Right lobe of liver (tissue), 6 donors: ENCODE measurements at regions of chr1 and their contacts with region 1.

Region 1: DNA sequence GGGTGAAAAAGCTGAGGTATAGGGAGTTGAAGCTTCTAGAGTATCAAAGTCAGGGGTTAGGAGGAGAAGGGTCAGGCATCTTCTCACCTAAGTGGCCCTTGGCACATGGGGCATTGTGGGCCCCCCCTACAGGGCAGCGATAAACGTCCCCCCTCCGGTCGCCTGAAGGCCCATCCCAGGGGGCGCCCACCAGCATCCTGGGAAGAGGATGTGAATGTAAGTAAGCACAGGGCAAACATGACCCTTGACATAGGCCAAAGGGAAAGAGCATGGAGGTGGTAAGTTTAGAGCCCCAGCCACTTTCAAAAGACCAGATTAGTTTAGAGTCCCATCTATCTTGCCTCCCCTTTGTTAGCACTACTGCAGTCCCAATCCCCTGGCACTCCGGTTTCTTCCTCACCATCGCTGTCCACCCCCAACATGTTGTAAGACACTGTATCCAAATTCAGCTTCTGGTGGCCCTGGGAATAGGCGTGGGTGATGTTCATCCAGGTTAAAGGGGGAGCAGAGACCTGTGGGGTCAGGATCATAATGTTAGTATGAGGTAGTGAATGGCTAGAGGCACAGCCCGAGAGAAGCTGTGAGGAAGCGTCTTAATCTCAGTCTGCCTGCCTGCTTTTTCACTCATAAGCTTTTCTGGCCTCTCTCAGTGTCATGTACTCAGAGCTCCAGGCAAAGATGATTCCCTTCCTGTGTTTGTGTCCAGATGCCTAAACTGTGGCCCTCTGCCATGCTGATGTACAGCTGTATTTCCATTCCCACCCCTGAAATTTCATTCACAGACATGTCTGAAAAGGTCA is 2.7 kb downstream of the ITGA10 start:
- DNase-seq: no peak
- ATAC-seq: peak in 1 of 4 donors; percentile 23
- H3K4me3 ChIP-seq: no peak overlapping the region
- H3K27ac ChIP-seq: no peak overlapping the region
- H3K4me1 ChIP-seq: no peaks in the 10 kb centered on the region
- H3K27me3 ChIP-seq: no peaks in the 10 kb centered on the region
- CTCF ChIP-seq: no peak
- POLR2A ChIP-seq: no peak

Region 2: GRCh38 chr1:145858894-145859490 is 48.2 kb before region 1 on chr1 and contains the start of gene PIAS3:
- intact Hi-C with region 1: loop called in 1 of 2 experiments (anchors 10 kb)
- DNase-seq: peak; percentile 98
- ATAC-seq: peak; percentile 93 to 96 (median 94)
- H3K4me3 ChIP-seq: peak within 1 kb of the TSS; percentile 54 to 80 (median 71)
- H3K27ac ChIP-seq: peak within 1 kb of the TSS; percentile 45 to 61 (median 55)
- H3K4me1 ChIP-seq: peaks cover 0 to 12% (median 0%) of the 10 kb centered on the region in 4 donors
- H3K27me3 ChIP-seq: no peaks in the 10 kb centered on the region
- CTCF ChIP-seq: no peak
- POLR2A ChIP-seq: peak; percentile 49
- total RNA-seq, gene PIAS3: 5.5 to 8.9 (median 6.7) TPM